ENCODE measurements at regions of chr1 and their contacts with region 1.

Region 1: GRCh38 chr1:211323156-211324063 is 3.2 kb upstream of the TRAF5 start:
- DNase-seq: peak; percentile 44 to 86
- ATAC-seq: peak; percentile 69 to 82 (median 73)
- H3K4me3 ChIP-seq: no peak overlapping the region
- H3K4me3 Mint-ChIP-seq: no peak overlapping the region
- H3K27ac ChIP-seq: no peak overlapping the region
- H3K27ac Mint-ChIP-seq: no peak overlapping the region
- H3K4me1 ChIP-seq: peaks cover 23% of the 10 kb centered on the region
- H3K4me1 Mint-ChIP-seq: peaks cover 25 to 31% of the 10 kb centered on the region in 2 donors
- H3K27me3 ChIP-seq: no peaks in the 10 kb centered on the region
- H3K27me3 Mint-ChIP-seq: no peaks in the 10 kb centered on the region
- CTCF ChIP-seq: peak; percentile 82

Region 2: GRCh38 chr1:211092955-211093354 is 230.5 kb before region 1 on chr1:
- intact Hi-C with region 1: no loop called
- DNase-seq: no peak
- ATAC-seq: no peak
- H3K4me3 ChIP-seq: no peak overlapping the region
- H3K4me3 Mint-ChIP-seq: no peak overlapping the region
- H3K27ac ChIP-seq: no peak overlapping the region
- H3K27ac Mint-ChIP-seq: no peak overlapping the region
- H3K4me1 ChIP-seq: no peaks in the 10 kb centered on the region
- H3K4me1 Mint-ChIP-seq: no peaks in the 10 kb centered on the region
- H3K27me3 ChIP-seq: no peaks in the 10 kb centered on the region
- H3K27me3 Mint-ChIP-seq: peaks cover 11 to 17% of the 10 kb centered on the region in 2 donors
- CTCF ChIP-seq: no peak

Region 3: GRCh38 chr1:211382714-211383480 is 59.5 kb after region 1 on chr1:
- intact Hi-C with region 1: loop called (anchors 2 kb)
- DNase-seq: peak; percentile 79 to 87
- ATAC-seq: peak; percentile 92 to 94 (median 92)
- H3K4me3 ChIP-seq: peak overlapping the region; percentile 90
- H3K4me3 Mint-ChIP-seq: peak overlapping the region; percentile 91
- H3K27ac ChIP-seq: peak overlapping the region; percentile 97
- H3K27ac Mint-ChIP-seq: peak overlapping the region; percentile 95 to 97
- H3K4me1 ChIP-seq: peaks cover 10% of the 10 kb centered on the region
- H3K4me1 Mint-ChIP-seq: peaks cover 30 to 38% of the 10 kb centered on the region in 2 donors
- H3K27me3 ChIP-seq: no peaks in the 10 kb centered on the region
- H3K27me3 Mint-ChIP-seq: peaks cover 0 to 3% of the 10 kb centered on the region in 2 donors
- CTCF ChIP-seq: no peak

Region 4: DNA sequence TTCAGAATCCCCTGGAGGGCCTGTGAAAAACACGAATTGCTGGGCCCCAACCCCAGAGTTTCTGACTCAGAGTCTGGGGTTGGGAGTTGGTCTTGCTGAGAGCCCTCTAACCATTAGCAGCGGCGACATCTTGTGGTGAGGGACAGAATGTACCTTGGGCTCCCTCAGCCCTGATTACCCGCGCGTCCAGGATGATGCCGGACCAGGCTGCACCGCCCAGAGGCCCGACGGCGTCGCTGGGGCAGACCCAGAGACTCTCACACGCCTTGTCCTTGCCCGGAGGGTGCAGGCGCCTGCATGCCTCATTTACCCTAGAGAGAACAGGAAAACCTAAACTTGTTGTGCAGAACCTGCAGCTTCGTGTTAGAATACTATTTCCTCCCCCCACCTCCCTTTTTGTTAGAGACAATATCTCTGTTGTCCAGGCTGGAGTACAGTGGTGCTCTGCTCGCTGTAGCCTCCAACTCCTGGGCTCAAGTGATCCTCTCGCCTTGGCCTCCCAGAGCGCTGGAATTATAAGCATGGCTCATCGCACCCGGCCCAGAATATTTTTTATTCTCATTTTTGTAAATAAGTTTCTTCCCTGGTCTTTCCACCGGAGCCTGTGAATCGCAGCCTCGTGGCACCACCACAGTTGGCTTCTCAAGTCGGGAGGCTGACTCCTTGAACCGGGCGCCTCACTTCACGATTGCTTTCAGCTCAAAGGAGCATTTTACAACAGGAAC is 190.8 kb after region 1 on chr1:
- intact Hi-C with region 1: loop called (anchors 1 kb)
- DNase-seq: peak; percentile 52 to 78
- ATAC-seq: peak; percentile 74 to 79 (median 78)
- H3K4me3 ChIP-seq: no peak overlapping the region
- H3K4me3 Mint-ChIP-seq: peak overlapping the region; percentile 75
- H3K27ac ChIP-seq: no peak overlapping the region
- H3K27ac Mint-ChIP-seq: peak overlapping the region in 1 of 2 donors; percentile 80
- H3K4me1 ChIP-seq: peaks cover 29% of the 10 kb centered on the region
- H3K4me1 Mint-ChIP-seq: peaks cover 10 to 20% of the 10 kb centered on the region in 2 donors
- H3K27me3 ChIP-seq: peaks cover 2% of the 10 kb centered on the region
- H3K27me3 Mint-ChIP-seq: peaks cover 0 to 3% of the 10 kb centered on the region in 2 donors
- CTCF ChIP-seq: peak; percentile 59

Region 5: GRCh38 chr1:211625040-211625439 is 301.6 kb after region 1 on chr1:
- intact Hi-C with region 1: loop called (anchors 1 kb)
- DNase-seq: peak in 1 of 2 donors; percentile 69
- ATAC-seq: peak; percentile 74 to 98 (median 94)
- H3K4me3 ChIP-seq: no peak overlapping the region
- H3K4me3 Mint-ChIP-seq: no peak overlapping the region
- H3K27ac ChIP-seq: no peak overlapping the region
- H3K27ac Mint-ChIP-seq: no peak overlapping the region
- H3K4me1 ChIP-seq: no peaks in the 10 kb centered on the region
- H3K4me1 Mint-ChIP-seq: no peaks in the 10 kb centered on the region
- H3K27me3 ChIP-seq: no peaks in the 10 kb centered on the region
- H3K27me3 Mint-ChIP-seq: peaks cover under 1 to 6% of the 10 kb centered on the region in 2 donors
- CTCF ChIP-seq: peak; percentile 38

Measured in natural killer cell (primary cell).